ENCODE measurements at regions of chr6 and their contacts with region 1.

Region 1: DNA sequence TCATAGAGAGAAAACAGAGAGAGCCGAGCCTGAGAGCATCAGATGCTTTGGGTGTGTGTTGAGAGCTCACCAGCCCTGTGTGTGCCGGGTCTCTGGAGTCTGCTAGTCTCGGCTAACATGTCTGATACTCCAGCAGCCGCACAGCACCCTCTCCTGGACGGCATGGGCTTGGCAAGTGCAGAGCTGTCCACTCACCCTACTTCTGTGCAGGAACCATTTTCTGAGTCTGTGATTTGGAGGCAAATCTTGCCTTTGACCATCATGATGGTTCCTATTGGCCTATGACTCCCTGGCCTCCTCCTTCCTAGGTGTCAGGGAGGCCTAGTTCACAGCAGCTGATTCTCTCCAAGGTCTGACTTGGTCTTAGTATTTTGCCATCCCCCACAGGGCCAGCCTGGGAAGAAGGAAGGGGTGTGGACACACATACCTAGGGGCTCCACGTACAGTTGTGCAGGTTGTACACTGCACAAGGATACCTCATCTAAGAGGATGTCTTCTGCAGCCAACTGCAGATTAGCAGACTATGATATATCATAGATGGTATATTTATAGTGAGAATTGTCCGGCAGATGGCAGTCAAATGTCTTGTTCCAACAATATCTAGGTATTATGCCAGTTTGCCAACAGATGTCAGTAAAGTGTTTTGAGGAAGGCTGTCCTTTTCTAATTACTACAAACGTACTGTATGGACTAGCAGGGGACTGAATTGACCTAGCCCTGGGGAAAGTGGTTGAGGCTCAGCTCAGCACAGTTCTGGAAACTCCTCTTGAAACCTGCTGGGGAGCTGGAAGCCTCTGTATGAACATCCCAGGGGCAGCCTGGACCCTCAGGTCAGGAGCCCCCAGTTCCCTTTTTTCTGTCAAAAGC is 13.0 kb downstream of the FGD2 start:
- DNase-seq: peak; percentile 95
- H3K4me3 Mint-ChIP-seq: peak overlapping the region; percentile 16
- H3K27ac Mint-ChIP-seq: peak overlapping the region; percentile 81
- H3K4me1 Mint-ChIP-seq: peaks cover 56% of the 10 kb centered on the region
- H3K27me3 Mint-ChIP-seq: no peaks in the 10 kb centered on the region

Region 2: DNA sequence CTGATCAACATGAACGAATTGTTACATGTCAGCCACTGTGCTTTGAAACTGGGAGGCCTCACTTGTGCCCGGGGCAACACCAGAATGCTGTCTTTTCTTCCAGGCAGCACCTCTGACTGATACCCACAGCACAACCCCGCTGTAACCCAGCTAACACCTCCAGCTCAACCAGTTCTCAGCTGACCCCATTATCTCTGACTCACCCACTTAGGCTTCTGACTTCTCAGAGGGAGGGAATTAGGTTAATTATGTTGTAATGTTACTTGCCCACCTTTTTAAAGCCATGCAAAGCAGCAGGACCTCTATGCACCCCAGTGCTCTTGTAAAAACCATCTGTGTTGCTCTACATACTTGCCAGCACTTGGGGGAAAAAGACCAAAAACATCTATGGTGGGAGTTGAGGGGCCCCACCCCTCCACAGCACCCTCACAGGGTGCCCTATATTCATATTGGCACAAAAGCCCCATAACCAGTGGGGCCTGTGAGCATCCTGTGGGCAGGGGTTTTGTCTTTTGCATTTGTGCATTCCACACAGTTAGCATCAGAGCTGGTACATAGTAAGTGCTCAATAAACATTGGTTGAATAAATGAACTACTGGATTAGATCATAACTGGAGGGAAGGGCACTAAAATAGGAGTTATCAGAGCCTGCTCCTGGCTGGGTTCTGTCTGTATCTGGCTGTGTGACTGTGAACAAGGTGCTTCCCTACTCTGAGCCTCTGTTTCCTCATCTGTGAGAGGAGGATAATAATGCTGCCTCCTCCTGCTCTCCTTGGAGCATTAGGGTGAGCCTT is 704.0 kb before region 1 on chr6:
- CTCF ChIA-PET with region 1: no interaction called
- POLR2A ChIA-PET with region 1: no interaction called
- DNase-seq: no peak
- H3K4me3 Mint-ChIP-seq: no peak overlapping the region
- H3K27ac Mint-ChIP-seq: no peak overlapping the region
- H3K4me1 Mint-ChIP-seq: no peaks in the 10 kb centered on the region
- H3K27me3 Mint-ChIP-seq: peaks cover 12% of the 10 kb centered on the region

Region 3: GRCh38 chr6:36745836-36746235 is 272.6 kb before region 1 on chr6:
- CTCF ChIA-PET with region 1: no interaction called
- POLR2A ChIA-PET with region 1: no interaction called
- DNase-seq: no peak
- H3K4me3 Mint-ChIP-seq: no peak overlapping the region
- H3K27ac Mint-ChIP-seq: no peak overlapping the region
- H3K4me1 Mint-ChIP-seq: peaks cover 28% of the 10 kb centered on the region
- H3K27me3 Mint-ChIP-seq: no peaks in the 10 kb centered on the region

Region 4: DNA sequence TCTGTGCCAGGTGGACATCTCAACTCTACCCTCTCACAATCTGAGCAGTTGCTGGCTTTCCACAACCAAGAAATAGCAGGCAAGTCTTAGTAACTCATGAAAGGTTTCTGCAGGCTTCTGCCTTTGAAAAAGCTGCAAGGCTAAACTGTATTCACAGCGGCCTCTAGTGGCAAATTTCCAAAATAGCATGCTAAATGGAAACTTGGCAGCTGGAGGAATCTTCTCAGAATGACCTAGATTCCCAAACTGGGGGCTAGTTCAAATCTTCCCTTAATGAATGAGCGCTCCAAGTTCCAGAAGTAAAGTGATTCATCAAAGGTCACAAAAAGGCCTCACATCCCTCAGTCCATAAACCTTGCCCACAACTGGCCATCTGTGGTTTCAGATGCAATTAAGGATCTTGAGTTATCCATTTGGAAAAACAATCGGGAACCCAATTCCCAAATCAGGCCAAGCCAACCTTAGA is 167.2 kb before region 1 on chr6:
- CTCF ChIA-PET with region 1: interaction called, 14 read pairs
- POLR2A ChIA-PET with region 1: no interaction called
- DNase-seq: peak; percentile 46
- H3K4me3 Mint-ChIP-seq: no peak overlapping the region
- H3K27ac Mint-ChIP-seq: no peak overlapping the region
- H3K4me1 Mint-ChIP-seq: peaks cover 5% of the 10 kb centered on the region
- H3K27me3 Mint-ChIP-seq: no peaks in the 10 kb centered on the region

Region 5: DNA sequence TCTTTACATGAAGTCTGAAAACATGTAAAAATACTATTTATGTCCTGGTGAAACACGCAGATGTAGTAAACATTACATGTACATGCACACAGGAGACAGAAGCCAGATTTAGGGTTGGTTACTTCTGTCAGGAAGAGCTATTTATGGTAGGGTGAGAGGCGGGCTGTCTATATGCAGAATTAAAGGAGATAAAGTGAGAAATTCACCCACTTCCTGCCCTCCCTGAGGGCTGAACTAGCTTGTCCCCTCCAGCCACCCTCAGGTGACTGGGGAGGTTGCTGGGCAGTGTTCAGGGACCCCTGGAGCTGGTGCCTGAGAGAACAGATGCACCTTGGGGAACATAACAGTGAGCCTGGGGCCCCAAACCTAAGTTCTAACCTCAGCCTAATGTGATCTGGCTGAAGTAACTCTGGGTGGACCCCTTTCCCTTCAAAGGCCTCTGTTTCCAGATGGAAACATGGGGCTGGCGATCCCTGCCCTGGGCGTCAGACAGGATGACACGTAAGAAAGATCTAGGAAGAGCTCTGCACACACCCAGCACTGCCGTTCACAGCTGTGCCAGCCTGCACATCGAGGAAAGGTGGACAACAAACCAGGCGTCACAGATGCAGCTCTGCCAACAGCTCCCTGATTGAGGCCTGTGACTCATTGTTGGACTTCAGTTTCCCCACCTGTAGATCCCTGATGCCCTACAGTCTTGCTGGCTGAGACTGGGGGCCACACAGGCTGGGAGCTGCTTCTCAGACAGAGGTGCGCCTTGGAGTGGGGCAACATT is 62.6 kb before region 1 on chr6:
- CTCF ChIA-PET with region 1: interaction called, 13 read pairs
- POLR2A ChIA-PET with region 1: no interaction called
- DNase-seq: no peak
- H3K4me3 Mint-ChIP-seq: peak overlapping the region; percentile 62
- H3K27ac Mint-ChIP-seq: no peak overlapping the region
- H3K4me1 Mint-ChIP-seq: peaks cover 53% of the 10 kb centered on the region
- H3K27me3 Mint-ChIP-seq: peaks cover 6% of the 10 kb centered on the region

Region 6: GRCh38 chr6:37029249-37029971 is 11.0 kb after region 1 on chr6:
- CTCF ChIA-PET with region 1: interaction called, 22 read pairs
- POLR2A ChIA-PET with region 1: interaction called, 5 read pairs
- DNase-seq: peak; percentile 63
- H3K4me3 Mint-ChIP-seq: no peak overlapping the region
- H3K27ac Mint-ChIP-seq: peak overlapping the region; percentile 86
- H3K4me1 Mint-ChIP-seq: peaks cover 75% of the 10 kb centered on the region
- H3K27me3 Mint-ChIP-seq: no peaks in the 10 kb centered on the region

Region 7: DNA sequence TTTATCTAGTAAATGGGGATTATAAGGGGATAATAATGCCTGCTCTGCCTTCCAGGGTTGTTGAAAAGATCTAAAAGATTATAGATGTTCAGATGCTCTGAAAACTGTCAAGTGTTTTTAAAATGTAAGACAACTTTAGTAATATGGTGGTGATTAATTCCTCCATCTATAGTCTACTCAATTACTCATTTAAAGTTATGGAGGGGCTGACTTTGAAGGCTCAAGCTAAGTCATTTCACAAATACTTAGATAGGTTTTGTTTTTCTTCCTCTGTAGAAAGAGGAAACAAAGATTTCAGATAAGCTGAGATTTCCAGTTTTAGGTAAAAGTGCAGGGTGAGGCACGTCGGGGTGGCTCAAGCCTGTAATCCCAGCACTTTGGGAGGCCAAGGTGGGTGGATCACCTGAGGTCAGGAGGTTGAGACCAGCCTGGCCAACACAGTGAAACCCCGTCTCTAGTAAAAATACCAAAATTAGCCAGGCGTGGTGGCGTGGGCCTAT is 101.0 kb after region 1 on chr6:
- CTCF ChIA-PET with region 1: no interaction called
- POLR2A ChIA-PET with region 1: no interaction called
- DNase-seq: no peak
- H3K4me3 Mint-ChIP-seq: no peak overlapping the region
- H3K27ac Mint-ChIP-seq: no peak overlapping the region
- H3K4me1 Mint-ChIP-seq: peaks cover 10% of the 10 kb centered on the region
- H3K27me3 Mint-ChIP-seq: peaks cover 3% of the 10 kb centered on the region

Region 8: DNA sequence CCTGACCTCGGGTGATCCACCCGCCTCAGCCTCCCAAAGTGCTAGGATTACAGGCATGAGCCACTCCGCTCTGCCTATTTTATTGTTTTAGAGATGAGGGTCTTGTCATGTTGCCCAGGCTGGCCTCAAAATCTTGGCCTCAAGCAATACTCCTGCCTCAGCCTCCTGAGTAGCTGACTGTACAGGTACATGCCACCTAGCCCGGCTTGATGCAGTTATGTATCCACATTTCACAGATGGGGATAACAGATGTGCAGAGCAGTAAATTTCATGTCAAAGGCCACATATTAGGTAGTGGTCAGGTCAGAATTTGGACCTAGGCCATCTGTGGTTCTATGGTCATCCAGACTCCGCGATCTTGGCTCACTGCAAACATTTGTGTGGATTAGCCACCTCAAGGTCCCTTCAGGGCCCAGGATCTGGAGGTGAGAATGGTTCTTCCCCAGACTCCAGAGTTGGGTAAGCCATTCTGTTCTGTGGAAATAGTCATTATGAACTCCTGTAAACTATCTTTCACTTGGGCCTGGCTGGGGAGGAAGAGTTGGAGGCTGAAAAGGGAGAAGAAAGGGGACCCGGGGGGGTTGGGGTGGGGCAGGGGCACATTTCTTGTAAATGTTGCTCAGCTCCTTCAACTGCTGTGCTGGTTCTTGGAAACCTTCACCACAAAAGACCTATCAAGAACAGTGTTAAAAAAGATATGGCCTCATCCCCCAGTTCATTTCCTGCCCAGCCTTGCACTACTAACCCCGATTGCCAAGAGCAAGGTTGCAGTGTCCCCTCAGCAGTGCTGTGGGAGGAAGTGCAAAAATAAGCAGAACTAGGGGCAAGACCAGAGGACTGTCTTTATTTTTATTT is 164.5 kb after region 1 on chr6:
- CTCF ChIA-PET with region 1: interaction called, 275 read pairs
- POLR2A ChIA-PET with region 1: interaction called, 557 read pairs
- DNase-seq: peak; percentile 84
- H3K4me3 Mint-ChIP-seq: peak overlapping the region; percentile 46
- H3K27ac Mint-ChIP-seq: peak overlapping the region; percentile 97
- H3K4me1 Mint-ChIP-seq: peaks cover 77% of the 10 kb centered on the region
- H3K27me3 Mint-ChIP-seq: no peaks in the 10 kb centered on the region

Region 9: DNA sequence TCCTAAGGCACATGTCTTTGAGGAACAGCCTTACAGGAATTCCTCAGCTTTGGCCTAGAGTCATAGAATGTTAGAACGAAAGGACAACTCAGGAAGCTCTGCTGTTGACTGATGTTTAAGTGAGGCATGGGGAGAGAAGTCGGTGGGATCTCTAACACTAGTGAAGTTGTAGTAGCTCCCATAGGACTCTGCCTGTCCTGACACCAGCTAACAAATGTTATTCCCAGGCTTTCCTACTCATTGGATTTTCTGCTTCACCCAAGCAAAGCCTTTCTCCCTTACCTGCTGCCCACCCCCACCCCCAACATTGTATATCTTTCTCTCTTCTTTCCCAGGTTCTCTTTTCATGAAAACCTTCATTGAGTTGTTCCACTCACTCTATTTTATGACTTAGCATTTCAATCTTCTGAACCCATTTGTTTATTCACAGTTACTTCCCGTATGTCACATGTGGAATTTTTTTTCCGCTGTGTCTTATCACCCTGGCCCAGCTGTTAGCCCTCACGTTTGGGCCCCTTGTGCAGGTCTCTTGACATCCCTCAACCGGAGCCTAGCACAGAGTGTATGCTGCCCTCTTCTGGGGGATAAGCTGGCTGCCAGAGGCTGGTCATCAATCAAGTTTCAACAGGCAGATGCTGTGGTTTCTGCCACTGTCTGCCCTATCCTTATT is 296.2 kb after region 1 on chr6:
- CTCF ChIA-PET with region 1: interaction called, 71 read pairs
- POLR2A ChIA-PET with region 1: interaction called, 9 read pairs
- DNase-seq: peak; percentile 56
- H3K4me3 Mint-ChIP-seq: no peak overlapping the region
- H3K27ac Mint-ChIP-seq: no peak overlapping the region
- H3K4me1 Mint-ChIP-seq: peaks cover 10% of the 10 kb centered on the region
- H3K27me3 Mint-ChIP-seq: no peaks in the 10 kb centered on the region

Measured in activated CD4-positive, alpha-beta memory T cell treated with anti-CD3 and anti-CD28 coated beads, Interleukin-2, amount 10 ng/mL, durations not matched to agents 7 days and 5 days (primary cell).